ENCODE measurements at regions of chr1 and their contacts with region 1.

Region 1: DNA sequence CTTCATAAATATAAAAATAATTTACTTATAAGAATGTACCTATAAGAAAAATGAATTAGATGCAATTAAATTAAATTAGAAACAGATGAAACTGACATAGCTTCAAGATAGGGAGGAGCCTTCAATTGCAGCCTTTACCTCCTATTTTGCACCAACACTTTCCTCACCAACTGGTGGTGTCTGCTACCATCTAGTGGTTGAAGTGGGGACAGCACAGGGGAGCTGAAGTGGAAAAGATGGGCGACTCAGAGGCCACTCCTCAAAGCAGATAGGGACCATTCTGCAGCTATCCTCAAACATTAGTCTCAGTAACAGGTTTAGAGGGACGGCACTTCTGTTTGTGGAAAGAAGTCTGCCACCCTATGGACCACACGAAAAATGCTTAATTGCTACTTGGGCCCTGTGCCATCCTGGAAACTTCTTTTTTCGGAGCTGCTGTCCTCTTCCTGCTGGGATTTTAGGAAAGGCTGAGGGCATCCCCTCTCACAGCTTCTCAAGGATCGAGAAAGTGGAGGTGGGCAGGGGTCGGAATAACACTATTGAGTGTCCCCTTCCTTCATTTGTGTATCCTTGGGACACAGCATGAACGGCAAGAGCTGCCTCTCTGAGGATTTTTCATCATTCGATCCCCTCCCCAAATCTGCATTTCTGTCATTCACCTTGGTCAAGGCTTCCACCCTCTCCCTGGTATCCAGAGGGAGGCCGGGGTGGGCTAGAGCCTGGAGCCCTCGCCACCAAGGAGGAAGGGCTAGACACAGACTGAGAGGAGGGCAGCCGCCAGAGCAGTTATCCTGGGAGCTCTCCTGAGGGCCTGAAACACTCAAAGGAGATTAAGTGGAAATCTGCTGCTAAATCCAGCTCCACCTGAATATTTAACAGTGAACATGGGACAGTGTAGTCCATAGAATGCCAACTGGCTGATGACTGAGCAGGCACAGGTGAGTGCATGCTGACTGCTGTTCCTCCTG is 9.6 kb downstream of the PROK1 start:
- DNase-seq: peak; percentile 88
- ATAC-seq: peak; percentile 87
- H3K4me3 Mint-ChIP-seq: no peak overlapping the region
- H3K27ac Mint-ChIP-seq: no peak overlapping the region
- H3K4me1 Mint-ChIP-seq: no peaks in the 10 kb centered on the region
- H3K27me3 Mint-ChIP-seq: no peaks in the 10 kb centered on the region; the same call in 1 of the 2 replicates
- CTCF ChIP-seq: peak; percentile 81

Region 2: GRCh38 chr1:110087812-110088738 is 372.5 kb before region 1 on chr1:
- CTCF ChIA-PET with region 1: interaction called, 13 read pairs
- POLR2A ChIA-PET with region 1: no interaction called
- DNase-seq: peak; percentile 60
- ATAC-seq: peak; percentile 76
- H3K4me3 Mint-ChIP-seq: no peak overlapping the region
- H3K27ac Mint-ChIP-seq: no peak overlapping the region
- H3K4me1 Mint-ChIP-seq: peaks cover 33% of the 10 kb centered on the region
- H3K27me3 Mint-ChIP-seq: peaks cover 50% of the 10 kb centered on the region
- CTCF ChIP-seq: peak; percentile 71

Region 3: DNA sequence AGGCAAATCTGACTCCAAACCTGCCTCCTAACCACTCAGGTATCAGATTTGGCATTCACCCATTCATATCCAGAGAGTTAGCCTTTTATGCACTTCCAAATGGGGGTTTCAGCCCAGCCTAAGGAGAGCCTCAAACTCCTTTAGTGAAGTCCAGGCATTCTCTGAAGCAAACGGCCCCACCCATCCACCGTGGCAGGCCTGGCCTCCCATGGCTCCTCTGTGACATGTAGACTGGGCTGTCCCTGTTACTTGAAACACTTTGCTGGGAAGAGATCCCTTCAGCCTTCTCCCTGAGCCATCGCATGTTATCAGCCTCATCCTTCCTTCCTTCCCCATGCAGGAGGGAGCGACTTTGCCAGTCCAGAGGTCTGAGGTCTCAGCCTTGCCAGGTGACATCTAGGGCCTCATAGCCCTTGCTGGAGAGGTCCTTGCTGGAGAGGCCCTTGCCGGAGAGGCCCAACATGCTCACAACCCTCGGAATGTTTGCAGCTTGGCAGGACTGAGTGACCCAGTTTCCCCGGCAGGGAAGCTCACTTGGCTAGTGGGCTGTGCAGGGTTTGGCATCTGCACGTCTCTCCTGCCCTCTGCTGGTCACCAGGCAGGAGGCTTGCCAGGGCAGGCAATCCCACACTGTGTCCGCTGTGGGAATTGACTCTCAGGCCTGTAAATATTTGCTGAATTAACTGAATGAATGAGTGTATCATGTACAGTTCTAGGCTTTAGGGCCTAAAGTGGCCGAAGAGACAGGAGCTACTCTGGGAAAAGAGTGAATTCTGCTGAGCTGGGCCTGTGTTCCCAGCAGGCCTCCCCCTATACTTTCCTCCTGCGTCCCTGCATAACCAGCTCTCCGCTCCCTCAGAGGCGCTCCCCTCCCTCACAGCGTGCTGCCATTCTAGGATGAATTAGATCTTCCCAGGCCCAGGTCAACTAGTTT is 148.1 kb before region 1 on chr1:
- CTCF ChIA-PET with region 1: interaction called, 53 read pairs
- POLR2A ChIA-PET with region 1: no interaction called
- DNase-seq: peak; percentile 80
- ATAC-seq: peak; percentile 96
- H3K4me3 Mint-ChIP-seq: peak overlapping the region; percentile 54
- H3K27ac Mint-ChIP-seq: no peak overlapping the region; the same call in 1 of the 2 replicates
- H3K4me1 Mint-ChIP-seq: peaks cover 24% of the 10 kb centered on the region
- H3K27me3 Mint-ChIP-seq: no peaks in the 10 kb centered on the region
- CTCF ChIP-seq: peak; percentile 77

Region 4: DNA sequence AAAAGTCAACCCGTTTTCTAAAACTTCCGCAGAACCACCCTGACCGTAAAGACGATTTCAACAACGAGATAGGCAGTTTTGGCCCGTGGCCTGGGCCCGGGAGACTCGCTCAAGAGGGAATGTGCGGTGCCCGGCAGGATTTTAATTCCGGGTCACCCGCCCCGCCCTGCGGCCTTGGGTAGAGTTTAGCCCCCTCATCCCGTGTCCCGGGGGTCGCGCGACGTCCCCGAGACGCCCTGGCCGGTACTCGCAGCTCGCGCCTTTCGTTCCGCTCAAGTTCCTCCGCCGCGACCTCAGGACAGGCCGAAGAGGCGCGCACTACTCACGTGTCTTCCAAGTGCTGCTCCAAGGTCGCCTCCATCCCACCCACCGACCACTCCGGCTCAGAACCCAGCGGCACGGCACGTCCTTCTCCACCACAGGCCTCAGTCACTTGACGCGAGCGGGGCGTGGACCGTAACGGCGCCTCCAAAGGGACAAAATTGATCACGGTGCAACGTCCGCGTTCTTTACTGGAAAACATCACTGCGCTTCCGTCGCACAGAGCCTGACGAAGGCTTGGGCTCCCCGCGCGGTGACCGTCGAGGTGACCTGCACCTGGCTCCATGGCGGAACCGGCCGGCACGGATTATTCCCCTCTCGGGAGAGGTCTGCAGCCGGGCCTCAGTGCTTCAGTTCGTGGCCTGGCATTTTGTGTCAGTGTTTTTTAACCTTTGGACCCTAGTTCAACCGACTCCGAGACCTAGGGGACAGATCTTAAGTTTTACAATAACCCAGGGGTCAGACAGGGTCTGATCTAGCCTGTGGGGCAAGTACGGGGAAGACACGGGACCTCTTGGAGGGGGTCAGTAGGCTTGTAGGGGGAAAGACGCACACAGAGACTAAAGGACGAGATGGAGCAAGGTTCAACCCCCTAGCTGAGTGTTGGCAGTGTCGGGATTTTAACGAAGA is 53.0 kb before region 1 on chr1 and contains the start of gene LAMTOR5:
- CTCF ChIA-PET with region 1: interaction called, 188 read pairs
- POLR2A ChIA-PET with region 1: interaction called, 4 read pairs
- DNase-seq: peak; percentile 87
- ATAC-seq: peak; percentile 89
- H3K4me3 Mint-ChIP-seq: peak within 1 kb of the TSS; percentile 97
- H3K27ac Mint-ChIP-seq: peak within 1 kb of the TSS; percentile 98
- H3K4me1 Mint-ChIP-seq: peaks cover 14% of the 10 kb centered on the region
- H3K27me3 Mint-ChIP-seq: 0 out of 2 replicates have a peak, but pooled peaks cover 2% of the 10 kb centered on the region
- CTCF ChIP-seq: no peak
- total RNA-seq, gene LAMTOR5: 76.0 to 106 TPM (median 93.0 TPM) in 3 replicates

Region 5: GRCh38 chr1:110433803-110434202 is 26.7 kb before region 1 on chr1:
- CTCF ChIA-PET with region 1: interaction called, 27 read pairs
- POLR2A ChIA-PET with region 1: no interaction called
- DNase-seq: peak; percentile 68
- ATAC-seq: peak; percentile 96
- H3K4me3 Mint-ChIP-seq: no peak overlapping the region
- H3K27ac Mint-ChIP-seq: no peak overlapping the region
- H3K4me1 Mint-ChIP-seq: peaks cover 21% of the 10 kb centered on the region
- H3K27me3 Mint-ChIP-seq: no peaks in the 10 kb centered on the region
- CTCF ChIP-seq: no peak

Region 6: GRCh38 chr1:110482662-110483307 is 22.2 kb after region 1 on chr1:
- CTCF ChIA-PET with region 1: interaction called, 23 read pairs
- POLR2A ChIA-PET with region 1: no interaction called
- DNase-seq: no peak
- ATAC-seq: peak; percentile 72
- H3K4me3 Mint-ChIP-seq: no peak overlapping the region
- H3K27ac Mint-ChIP-seq: no peak overlapping the region
- H3K4me1 Mint-ChIP-seq: peaks cover 34% of the 10 kb centered on the region
- H3K27me3 Mint-ChIP-seq: no peaks in the 10 kb centered on the region; the same call in 1 of the 2 replicates
- CTCF ChIP-seq: no peak

Region 7: GRCh38 chr1:110630839-110631663 is 170.5 kb after region 1 on chr1:
- CTCF ChIA-PET with region 1: no interaction called
- POLR2A ChIA-PET with region 1: no interaction called
- DNase-seq: peak; percentile 87
- ATAC-seq: peak; percentile 100
- H3K4me3 Mint-ChIP-seq: no peak overlapping the region
- H3K27ac Mint-ChIP-seq: no peak overlapping the region
- H3K4me1 Mint-ChIP-seq: no peaks in the 10 kb centered on the region
- H3K27me3 Mint-ChIP-seq: peaks cover 4% of the 10 kb centered on the region; the same call in 1 of the 2 replicates
- CTCF ChIP-seq: peak; percentile 82